CD4-positive, alpha-beta T cell (primary cell): ENCODE measurements at regions of chr13 and their contacts with region 1.

Region 1: GRCh38 chr13:32650705-32651311 is 64.6 kb downstream of the PDS5B start:
- DNase-seq: peak in 12 of 14 experiments; percentile 20 to 79 (median 39)
- ATAC-seq: peak; percentile 81
- H3K4me3 ChIP-seq: no peak overlapping the region
- H3K4me3 Mint-ChIP-seq: no peak overlapping the region
- H3K27ac ChIP-seq: no peak overlapping the region
- H3K27ac Mint-ChIP-seq: no peak overlapping the region
- H3K4me1 ChIP-seq: peaks cover 10% of the 10 kb centered on the region
- H3K4me1 Mint-ChIP-seq: peaks cover 45% of the 10 kb centered on the region
- H3K27me3 ChIP-seq: no peaks in the 10 kb centered on the region
- H3K27me3 Mint-ChIP-seq: no peaks in the 10 kb centered on the region
- CTCF ChIP-seq: peak; percentile 85

Region 2: DNA sequence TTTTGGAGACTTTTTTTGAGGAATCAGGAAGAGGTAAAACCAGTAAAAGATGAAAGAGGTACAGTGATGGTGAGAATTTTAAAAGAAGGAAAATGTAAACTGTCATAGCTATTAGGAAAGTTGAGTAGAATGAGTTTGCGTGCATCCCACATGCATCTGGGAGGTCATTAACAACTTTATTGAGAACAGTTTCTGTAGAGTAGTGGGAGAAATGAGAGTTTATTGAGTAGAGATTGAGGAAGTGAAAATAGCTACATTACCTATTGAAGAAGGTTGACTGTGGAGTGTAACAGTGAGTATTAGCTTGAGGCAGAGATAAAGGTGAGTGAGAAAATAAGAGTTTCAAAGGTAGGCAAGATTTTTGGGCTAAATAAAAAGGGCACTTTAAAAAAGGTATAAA is 296.8 kb before region 1 on chr13:
- CTCF ChIA-PET with region 1: no interaction called
- POLR2A ChIA-PET with region 1: no interaction called
- intact Hi-C with region 1: no loop called
- DNase-seq: no peak
- ATAC-seq: no peak
- H3K4me3 ChIP-seq: no peak overlapping the region
- H3K4me3 Mint-ChIP-seq: no peak overlapping the region
- H3K27ac ChIP-seq: no peak overlapping the region
- H3K27ac Mint-ChIP-seq: no peak overlapping the region
- H3K4me1 ChIP-seq: no peaks in the 10 kb centered on the region
- H3K4me1 Mint-ChIP-seq: no peaks in the 10 kb centered on the region
- H3K27me3 ChIP-seq: no peaks in the 10 kb centered on the region
- H3K27me3 Mint-ChIP-seq: no peaks in the 10 kb centered on the region
- CTCF ChIP-seq: no peak

Region 3: DNA sequence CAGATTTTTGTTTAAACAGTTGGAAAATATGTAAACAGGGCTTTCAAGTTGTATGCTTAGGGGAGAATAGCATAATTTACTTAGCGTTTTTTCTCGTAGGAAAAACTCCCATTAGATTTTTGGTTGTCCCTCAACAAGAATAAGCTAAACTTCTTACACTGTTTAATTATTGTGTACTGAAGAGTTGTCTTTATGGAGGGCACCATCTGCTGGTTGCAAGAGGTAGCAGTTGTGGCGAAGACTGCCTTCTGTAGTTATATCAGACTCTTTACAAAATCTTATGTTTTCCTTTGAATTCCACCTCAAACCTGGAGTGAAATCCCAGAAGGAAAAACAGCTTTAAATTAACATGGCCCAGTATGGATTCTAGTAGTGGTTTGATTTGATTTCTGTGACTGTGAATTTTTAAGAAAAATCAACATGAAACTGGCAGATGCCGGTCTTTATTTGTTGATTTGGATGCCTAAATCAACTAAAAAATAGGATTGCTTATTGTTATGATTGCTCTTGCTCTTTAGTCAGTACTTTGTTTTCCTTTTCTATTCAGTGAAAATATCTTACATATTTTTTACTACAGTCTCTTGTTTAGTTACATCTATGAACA is 11.2 kb before region 1 on chr13:
- CTCF ChIA-PET with region 1: interaction called, 20 read pairs
- POLR2A ChIA-PET with region 1: no interaction called
- intact Hi-C with region 1: no loop called
- DNase-seq: peak; percentile 22 to 82 (median 36)
- ATAC-seq: peak; percentile 98
- H3K4me3 ChIP-seq: no peak overlapping the region
- H3K4me3 Mint-ChIP-seq: no peak overlapping the region
- H3K27ac ChIP-seq: no peak overlapping the region
- H3K27ac Mint-ChIP-seq: no peak overlapping the region
- H3K4me1 ChIP-seq: no peaks in the 10 kb centered on the region
- H3K4me1 Mint-ChIP-seq: peaks cover 35% of the 10 kb centered on the region
- H3K27me3 ChIP-seq: no peaks in the 10 kb centered on the region
- H3K27me3 Mint-ChIP-seq: no peaks in the 10 kb centered on the region
- CTCF ChIP-seq: peak; percentile 88

Region 4: GRCh38 chr13:32737111-32737571 is 86.3 kb after region 1 on chr13:
- CTCF ChIA-PET with region 1: no interaction called
- POLR2A ChIA-PET with region 1: no interaction called
- intact Hi-C with region 1: no loop called
- DNase-seq: peak in 3 of 14 experiments; percentile 57 to 75 (median 60)
- ATAC-seq: peak; percentile 87
- H3K4me3 ChIP-seq: peak overlapping the region; percentile 53
- H3K4me3 Mint-ChIP-seq: peak overlapping the region; percentile 90
- H3K27ac ChIP-seq: peak overlapping the region; percentile 50 to 77
- H3K27ac Mint-ChIP-seq: peak overlapping the region; percentile 97
- H3K4me1 ChIP-seq: no peaks in the 10 kb centered on the region
- H3K4me1 Mint-ChIP-seq: peaks cover 35% of the 10 kb centered on the region
- H3K27me3 ChIP-seq: no peaks in the 10 kb centered on the region
- H3K27me3 Mint-ChIP-seq: no peaks in the 10 kb centered on the region
- CTCF ChIP-seq: no peak